ENCODE measurements at regions of chr19 and their contacts with region 1.

Region 1: GRCh38 chr19:18995804-18996241 is 37.5 kb downstream of the SUGP2 start:
- DNase-seq: peak; percentile 23
- ATAC-seq: peak; percentile 96
- H3K4me3 ChIP-seq: no peak overlapping the region
- H3K27ac ChIP-seq: no peak overlapping the region
- H3K4me1 ChIP-seq: no peaks in the 10 kb centered on the region; a peak in 1 of 4 replicates
- H3K27me3 ChIP-seq: no peaks in the 10 kb centered on the region
- CTCF ChIP-seq: peak in 2 of 3 experiments; percentile 61 to 73; a peak in 4 of 6 replicates
- POLR2A ChIP-seq: no peak
- RAD21 ChIP-seq: peak; percentile 51

Region 2: GRCh38 chr19:19139876-19140229 is 144.0 kb after region 1 on chr19:
- CTCF ChIA-PET with region 1: interaction called, 3 read pairs
- POLR2A ChIA-PET with region 1: no interaction called
- RAD21 ChIA-PET with region 1: no interaction called
- intact Hi-C with region 1: loop called (anchors 1 kb)
- DNase-seq: no peak
- ATAC-seq: no peak
- H3K4me3 ChIP-seq: no peak overlapping the region
- H3K27ac ChIP-seq: no peak overlapping the region
- H3K4me1 ChIP-seq: peaks cover 10 to 18% of the 10 kb centered on the region in 2 experiments
- H3K27me3 ChIP-seq: no peaks in the 10 kb centered on the region
- CTCF ChIP-seq: no peak
- POLR2A ChIP-seq: no peak
- RAD21 ChIP-seq: no peak